ENCODE measurements at regions of chr20 and their contacts with region 1.

Region 1: DNA sequence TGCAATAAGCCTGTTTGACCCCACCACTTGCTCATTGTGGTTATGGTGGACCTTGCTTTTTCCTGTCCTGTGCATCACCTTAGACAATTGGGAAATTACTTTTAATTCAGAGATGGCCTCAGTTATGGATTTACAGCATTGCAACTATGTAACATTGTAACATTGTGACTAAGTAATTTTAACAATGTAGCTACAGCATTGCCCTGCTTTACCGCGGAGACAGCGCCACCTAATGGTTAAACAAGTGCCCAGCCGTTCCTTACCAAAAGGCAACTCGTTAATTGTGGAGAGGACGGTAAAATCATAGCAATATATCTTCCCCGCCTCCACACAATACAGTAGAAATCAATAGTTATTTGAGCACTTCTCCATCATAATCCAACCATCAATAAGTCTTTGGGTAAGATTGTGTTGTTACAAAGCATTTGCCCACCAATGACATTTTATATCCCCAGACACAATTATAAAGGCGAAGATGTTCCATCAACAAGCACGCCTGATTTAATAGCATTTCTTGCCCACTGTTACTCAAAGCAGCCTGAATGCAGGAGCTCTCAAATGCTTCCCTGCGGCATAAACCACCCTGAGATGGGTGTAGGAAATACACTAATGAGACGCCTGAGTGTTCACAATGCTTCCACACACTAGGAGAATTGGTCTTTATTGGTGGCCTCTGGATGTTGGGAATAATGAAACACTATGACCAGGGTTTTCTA is 93.7 kb downstream of the PROKR2 start:
- DNase-seq: peak; percentile 80
- ATAC-seq: peak; percentile 75
- H3K4me3 Mint-ChIP-seq: no peak overlapping the region
- H3K27ac Mint-ChIP-seq: no peak overlapping the region
- H3K4me1 Mint-ChIP-seq: no peaks in the 10 kb centered on the region
- H3K27me3 Mint-ChIP-seq: peaks cover 2% of the 10 kb centered on the region

Region 2: DNA sequence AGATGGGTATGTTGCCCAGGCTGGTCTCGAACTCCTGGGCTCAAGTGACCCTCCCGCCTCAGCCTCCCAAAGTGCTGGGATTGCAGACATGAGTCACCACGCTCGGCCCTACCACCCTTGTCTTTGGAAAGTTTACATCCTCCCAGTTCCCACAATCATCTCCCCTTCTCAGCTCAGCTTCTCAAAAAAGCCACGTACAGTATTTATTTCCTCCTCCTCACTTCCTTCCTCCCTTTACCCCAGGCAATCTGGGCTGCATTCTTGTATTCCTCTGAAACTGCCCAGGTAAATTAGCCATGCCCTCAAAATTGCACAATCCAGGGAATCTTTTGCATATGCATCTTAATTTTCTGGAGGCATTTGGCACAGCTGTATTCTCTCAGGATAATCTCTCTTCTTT is 214.3 kb before region 1 on chr20:
- CTCF ChIA-PET with region 1: no interaction called
- POLR2A ChIA-PET with region 1: no interaction called
- intact Hi-C with region 1: no loop called
- DNase-seq: no peak
- ATAC-seq: no peak
- H3K4me3 Mint-ChIP-seq: no peak overlapping the region
- H3K27ac Mint-ChIP-seq: no peak overlapping the region
- H3K4me1 Mint-ChIP-seq: peaks cover 14% of the 10 kb centered on the region
- H3K27me3 Mint-ChIP-seq: no peaks in the 10 kb centered on the region

Region 3: DNA sequence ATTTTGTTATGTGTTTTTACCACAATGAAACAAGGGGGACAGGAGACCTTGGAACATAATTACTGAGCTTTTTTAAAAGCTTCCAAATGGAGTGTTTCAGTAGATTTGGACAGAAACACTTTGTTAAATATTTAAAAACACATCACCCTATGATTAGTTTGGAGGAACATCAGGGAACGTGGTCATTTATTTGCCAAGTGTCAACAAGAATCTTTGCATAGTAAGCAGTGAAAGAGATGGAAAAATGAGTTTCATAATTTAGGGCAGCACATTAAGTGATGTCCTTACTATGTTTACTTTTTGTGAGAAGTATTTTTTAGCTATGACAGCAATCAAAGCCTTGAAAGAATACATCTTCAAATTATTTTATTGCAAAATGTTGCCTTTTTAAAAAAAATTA is 11.1 kb after region 1 on chr20:
- CTCF ChIA-PET with region 1: interaction called, 13 read pairs
- POLR2A ChIA-PET with region 1: no interaction called
- intact Hi-C with region 1: no loop called
- DNase-seq: no peak
- ATAC-seq: no peak
- H3K4me3 Mint-ChIP-seq: no peak overlapping the region
- H3K27ac Mint-ChIP-seq: no peak overlapping the region
- H3K4me1 Mint-ChIP-seq: peaks cover 3% of the 10 kb centered on the region
- H3K27me3 Mint-ChIP-seq: peaks cover 25% of the 10 kb centered on the region